ENCODE measurements at regions of chr5 and their contacts with region 1.

Region 1: DNA sequence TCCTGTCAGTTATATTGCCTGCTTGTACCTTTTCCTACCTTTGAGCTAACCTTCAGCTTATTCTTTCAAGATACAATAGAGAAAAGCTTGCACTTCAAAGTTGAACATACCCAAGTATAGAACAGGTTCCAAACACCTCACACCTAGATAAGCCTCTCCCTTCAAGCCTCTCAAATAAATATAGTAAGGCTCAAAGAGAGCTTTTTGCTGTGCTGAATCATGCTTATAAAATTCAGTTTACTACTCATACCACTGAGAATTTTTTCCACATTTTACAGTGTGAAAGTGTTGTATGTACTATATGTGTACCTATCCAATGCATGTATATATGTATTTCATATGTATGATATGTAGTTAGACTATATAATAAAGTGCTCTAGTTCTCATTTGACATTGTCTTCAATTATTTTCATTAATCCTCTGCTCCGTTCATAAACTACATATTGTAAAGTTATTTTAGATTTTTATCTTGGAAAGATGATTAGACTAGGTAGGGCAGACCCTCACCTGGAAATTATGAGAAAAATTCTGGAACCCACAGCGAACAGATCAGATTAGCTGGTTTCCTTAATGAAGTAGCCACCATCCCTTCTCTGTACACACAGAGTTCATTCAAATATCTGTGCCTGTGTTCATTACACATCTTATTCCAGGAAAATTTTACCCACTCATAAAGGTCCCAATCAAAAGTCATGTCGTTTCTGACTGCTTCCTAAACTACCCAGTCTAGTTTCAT is 149.2 kb upstream of the RGMB start:
- DNase-seq: no peak
- ATAC-seq: no peak
- H3K4me3 Mint-ChIP-seq: no peak overlapping the region
- H3K27ac Mint-ChIP-seq: no peak overlapping the region
- H3K4me1 Mint-ChIP-seq: no peaks in the 10 kb centered on the region
- H3K27me3 Mint-ChIP-seq: no peaks in the 10 kb centered on the region
- CTCF ChIP-seq: no peak

Region 2: DNA sequence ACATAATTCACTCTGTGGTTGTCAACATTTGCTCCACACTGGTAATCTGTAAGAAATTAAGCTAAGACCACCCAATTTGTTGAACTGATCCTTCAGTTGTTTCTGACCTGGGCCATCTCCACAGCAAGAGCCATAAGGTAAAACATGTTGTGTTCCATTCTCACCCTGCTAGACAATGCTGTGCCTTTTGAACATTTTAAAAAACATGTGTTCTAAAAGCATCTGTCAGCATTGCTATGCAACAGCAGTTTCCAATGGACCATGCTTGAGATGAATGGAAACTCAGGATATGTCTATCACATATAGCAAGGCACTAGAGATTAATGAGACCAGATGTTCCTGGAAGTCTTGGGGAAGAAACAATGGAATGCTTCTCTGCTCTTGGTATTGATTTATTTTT is 305.9 kb before region 1 on chr5:
- CTCF ChIA-PET with region 1: no interaction called
- POLR2A ChIA-PET with region 1: interaction called, 10 read pairs
- DNase-seq: no peak
- ATAC-seq: no peak
- H3K4me3 Mint-ChIP-seq: no peak overlapping the region
- H3K27ac Mint-ChIP-seq: no peak overlapping the region
- H3K4me1 Mint-ChIP-seq: peaks cover 22% of the 10 kb centered on the region
- H3K27me3 Mint-ChIP-seq: no peaks in the 10 kb centered on the region
- CTCF ChIP-seq: no peak

Region 3: DNA sequence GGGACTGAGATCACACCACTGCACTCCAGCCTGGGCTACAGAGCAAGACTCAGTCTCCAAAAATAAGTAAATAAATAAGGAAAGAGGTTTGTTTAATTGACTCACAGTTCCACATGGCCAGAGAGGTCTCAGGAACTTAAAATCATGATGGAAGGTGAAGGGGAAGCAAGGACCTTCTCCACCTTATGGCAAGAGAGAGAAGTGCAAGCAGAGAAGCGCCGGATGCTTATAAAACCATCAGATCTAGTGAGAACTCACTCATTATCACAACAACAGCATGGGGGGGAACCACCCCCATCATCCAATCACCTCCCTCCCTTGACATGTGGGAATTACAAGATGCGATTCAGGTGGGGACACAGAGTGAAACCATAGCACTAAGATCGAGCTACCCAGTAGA is 126.4 kb after region 1 on chr5:
- CTCF ChIA-PET with region 1: no interaction called
- POLR2A ChIA-PET with region 1: no interaction called
- DNase-seq: peak; percentile 52
- ATAC-seq: peak; percentile 86
- H3K4me3 Mint-ChIP-seq: peak overlapping the region; percentile 44
- H3K27ac Mint-ChIP-seq: peak overlapping the region; percentile 77; the same call in 1 of the 2 replicates
- H3K4me1 Mint-ChIP-seq: peaks cover 46% of the 10 kb centered on the region
- H3K27me3 Mint-ChIP-seq: no peaks in the 10 kb centered on the region; the same call in 1 of the 2 replicates
- CTCF ChIP-seq: peak; percentile 47; the same call in 1 of the 2 replicates

Measured in WTC11 (cell line).